CD8-positive, alpha-beta memory T cell (primary cell): ENCODE measurements at regions of chr22 and their contacts with region 1.

Region 1: GRCh38 chr22:30423982-30424963 is 1.3 kb upstream of the MTFP1 start:
- DNase-seq: peak; percentile 96 to 100 (median 98)
- H3K4me3 ChIP-seq: peak overlapping the region; percentile 73
- H3K4me3 Mint-ChIP-seq: peak overlapping the region; percentile 91 to 98 (median 97)
- H3K27ac ChIP-seq: peak overlapping the region; percentile 84
- H3K27ac Mint-ChIP-seq: peak overlapping the region; percentile 93 to 99 (median 98)
- H3K4me1 ChIP-seq: peaks cover 44% of the 10 kb centered on the region
- H3K4me1 Mint-ChIP-seq: peaks cover 51 to 66% (median 62%) of the 10 kb centered on the region in 3 donors
- H3K27me3 ChIP-seq: no peaks in the 10 kb centered on the region
- H3K27me3 Mint-ChIP-seq: no peaks in the 10 kb centered on the region

Region 2: DNA sequence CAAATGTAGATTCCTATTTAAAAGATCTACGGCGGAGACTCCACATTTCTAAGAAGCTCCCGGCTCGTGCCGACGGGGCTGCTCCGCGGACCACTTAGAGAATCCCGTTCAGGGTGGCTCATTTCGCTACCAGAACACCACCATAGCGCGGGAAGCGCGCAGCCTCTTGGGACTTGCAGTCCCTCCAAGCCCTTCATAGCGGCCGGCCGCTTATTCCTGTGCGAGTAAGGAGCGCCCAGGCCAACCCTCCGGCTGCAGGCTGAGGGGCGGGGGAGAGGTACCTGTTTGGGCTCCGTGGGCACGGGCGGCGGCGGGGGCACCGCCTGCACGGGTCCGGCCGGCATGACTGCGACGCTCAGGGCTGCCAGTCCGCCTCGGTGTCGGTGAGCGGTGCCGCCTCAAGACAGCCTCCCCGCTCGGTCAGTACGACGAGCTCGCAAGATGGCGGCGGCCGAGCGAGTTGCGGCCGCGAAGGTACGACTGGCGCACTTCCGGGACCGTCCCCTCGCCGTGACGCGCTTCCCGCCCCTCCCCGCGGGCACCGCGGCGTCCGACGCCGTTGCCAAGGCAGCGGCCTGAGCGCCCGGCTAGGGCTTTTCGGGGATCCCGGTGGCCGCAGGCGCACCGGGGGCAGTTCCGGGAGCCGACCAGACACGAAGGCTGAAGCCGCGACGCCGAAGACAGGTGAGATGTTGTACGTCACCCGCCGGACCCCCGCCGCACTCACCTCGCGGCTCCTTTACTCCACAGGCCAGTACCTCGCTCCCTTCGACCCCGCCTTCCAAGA is 67.6 kb before region 1 on chr22 and contains the starts of genes CCDC157 and SF3A1:
- CTCF ChIA-PET with region 1: no interaction called
- POLR2A ChIA-PET with region 1: interaction called, 16 read pairs
- DNase-seq: peak; percentile 81 to 89 (median 88)
- H3K4me3 ChIP-seq: peak within 1 kb of the TSS; percentile 96
- H3K4me3 Mint-ChIP-seq: peak within 1 kb of the TSS; percentile 94 to 99 (median 98)
- H3K27ac ChIP-seq: peak within 1 kb of the TSS; percentile 98
- H3K27ac Mint-ChIP-seq: peak within 1 kb of the TSS; percentile 91 to 99 (median 96)
- H3K4me1 ChIP-seq: peaks cover 41% of the 10 kb centered on the region
- H3K4me1 Mint-ChIP-seq: peaks cover 46 to 57% (median 57%) of the 10 kb centered on the region in 3 donors
- H3K27me3 ChIP-seq: no peaks in the 10 kb centered on the region
- H3K27me3 Mint-ChIP-seq: peaks cover 0 to 3% of the 10 kb centered on the region in 2 donors
- total RNA-seq, gene CCDC157: 2.7 to 2.9 TPM
- total RNA-seq, gene SF3A1: 235 to 241 TPM

Region 3: GRCh38 chr22:30386960-30387827 is 37.1 kb before region 1 on chr22 and contains the start of gene RNF215:
- CTCF ChIA-PET with region 1: interaction called, 21 read pairs
- POLR2A ChIA-PET with region 1: interaction called, 3 read pairs
- DNase-seq: peak; percentile 74 to 82 (median 79)
- H3K4me3 ChIP-seq: peak within 1 kb of the TSS; percentile 22
- H3K4me3 Mint-ChIP-seq: peak within 1 kb of the TSS; percentile 64 to 93 (median 78)
- H3K27ac ChIP-seq: no peak within 1 kb of the TSS
- H3K27ac Mint-ChIP-seq: peak within 1 kb of the TSS; percentile 13 to 96 (median 71)
- H3K4me1 ChIP-seq: peaks cover 4% of the 10 kb centered on the region
- H3K4me1 Mint-ChIP-seq: peaks cover 10 to 20% (median 12%) of the 10 kb centered on the region in 3 donors
- H3K27me3 ChIP-seq: no peaks in the 10 kb centered on the region
- H3K27me3 Mint-ChIP-seq: peaks cover 4 to 14% of the 10 kb centered on the region in 2 donors
- total RNA-seq, gene RNF215: 6.3 to 7.9 TPM

Region 4: DNA sequence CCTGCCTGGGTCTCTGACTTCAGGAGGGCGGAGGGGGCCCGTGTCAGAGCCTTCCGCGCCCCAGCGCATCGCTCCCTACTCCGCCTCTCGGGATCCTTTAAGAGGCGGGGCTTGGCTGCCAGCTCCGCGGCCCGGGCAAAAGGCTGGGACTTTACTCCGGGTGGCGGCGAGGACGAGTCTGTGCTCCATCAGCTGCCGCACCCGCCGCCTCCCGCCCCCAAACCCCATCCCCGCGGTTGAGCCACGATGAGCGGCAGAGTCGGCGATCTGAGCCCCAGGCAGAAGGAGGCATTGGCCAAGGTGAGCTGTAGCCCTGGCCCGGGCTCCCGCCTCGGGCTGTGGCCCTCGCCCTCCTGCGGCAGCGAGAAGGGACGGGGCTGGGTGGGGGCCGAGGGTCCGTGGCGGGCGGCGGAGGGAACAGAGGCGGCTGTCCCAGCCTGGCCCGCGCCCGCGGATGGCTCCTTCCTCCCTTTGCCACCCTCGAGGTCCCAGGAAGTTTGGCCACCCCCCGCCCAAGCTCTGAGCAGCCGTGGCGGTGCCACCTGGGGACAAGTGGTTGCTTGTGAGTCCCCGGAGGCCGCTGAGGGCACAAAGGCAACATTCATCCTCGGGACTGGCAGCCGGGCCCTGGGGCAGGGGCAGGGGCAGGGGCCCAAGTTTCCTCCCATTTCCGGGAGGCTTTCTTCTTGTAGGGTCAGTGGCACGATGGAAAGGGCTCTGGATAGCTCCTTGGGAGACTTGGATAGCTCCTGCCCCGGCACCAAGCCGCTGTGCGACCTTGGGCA is 27.2 kb before region 1 on chr22 and contains the start of gene SEC14L2:
- CTCF ChIA-PET with region 1: interaction called, 21 read pairs
- POLR2A ChIA-PET with region 1: interaction called, 3 read pairs
- DNase-seq: peak; percentile 39 to 63 (median 42)
- H3K4me3 ChIP-seq: peak within 1 kb of the TSS; percentile 24
- H3K4me3 Mint-ChIP-seq: peak within 1 kb of the TSS; percentile 79 to 93 (median 81)
- H3K27ac ChIP-seq: no peak within 1 kb of the TSS
- H3K27ac Mint-ChIP-seq: peak within 1 kb of the TSS in 6 of 8 donors; percentile 40 to 91 (median 66)
- H3K4me1 ChIP-seq: peaks cover 41% of the 10 kb centered on the region
- H3K4me1 Mint-ChIP-seq: peaks cover 24 to 31% (median 25%) of the 10 kb centered on the region in 3 donors
- H3K27me3 ChIP-seq: peaks cover 12% of the 10 kb centered on the region
- H3K27me3 Mint-ChIP-seq: peaks cover 24 to 42% of the 10 kb centered on the region in 2 donors
- total RNA-seq, gene SEC14L2: 4.4 to 4.9 TPM

Region 5: DNA sequence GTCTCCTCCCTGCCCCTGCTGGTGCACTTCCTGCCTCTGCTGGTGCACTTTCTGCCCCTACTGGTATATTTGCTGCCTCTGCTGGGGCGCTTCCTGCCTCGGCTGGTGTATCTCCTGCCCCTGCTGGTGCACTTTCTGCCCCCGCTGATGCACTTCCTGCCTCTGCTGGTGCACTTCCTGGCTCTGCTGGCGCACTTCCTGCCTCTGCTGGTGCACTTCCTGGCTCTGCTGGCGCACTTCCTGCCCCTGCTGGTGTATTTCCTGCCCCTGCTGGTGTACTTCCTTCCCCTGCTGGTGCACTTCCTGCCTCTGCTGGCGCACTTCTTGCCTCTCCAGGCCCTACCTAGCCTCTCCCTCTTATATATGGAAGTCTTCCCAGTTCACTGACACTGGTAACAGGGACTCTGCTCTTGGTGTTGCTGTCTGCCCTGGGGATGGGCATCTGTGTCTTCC is 11.4 kb after region 1 on chr22:
- CTCF ChIA-PET with region 1: interaction called, 37 read pairs
- POLR2A ChIA-PET with region 1: interaction called, 13 read pairs
- DNase-seq: peak; percentile 77 to 95 (median 94)
- H3K4me3 ChIP-seq: peak overlapping the region; percentile 58
- H3K4me3 Mint-ChIP-seq: peak overlapping the region; percentile 50 to 93 (median 72)
- H3K27ac ChIP-seq: peak overlapping the region; percentile 62
- H3K27ac Mint-ChIP-seq: peak overlapping the region; percentile 89 to 100 (median 98)
- H3K4me1 ChIP-seq: peaks cover 22% of the 10 kb centered on the region
- H3K4me1 Mint-ChIP-seq: peaks cover 18 to 27% (median 25%) of the 10 kb centered on the region in 3 donors
- H3K27me3 ChIP-seq: peaks cover 9% of the 10 kb centered on the region
- H3K27me3 Mint-ChIP-seq: peaks cover 33% of the 10 kb centered on the region in 2 donors

Region 6: DNA sequence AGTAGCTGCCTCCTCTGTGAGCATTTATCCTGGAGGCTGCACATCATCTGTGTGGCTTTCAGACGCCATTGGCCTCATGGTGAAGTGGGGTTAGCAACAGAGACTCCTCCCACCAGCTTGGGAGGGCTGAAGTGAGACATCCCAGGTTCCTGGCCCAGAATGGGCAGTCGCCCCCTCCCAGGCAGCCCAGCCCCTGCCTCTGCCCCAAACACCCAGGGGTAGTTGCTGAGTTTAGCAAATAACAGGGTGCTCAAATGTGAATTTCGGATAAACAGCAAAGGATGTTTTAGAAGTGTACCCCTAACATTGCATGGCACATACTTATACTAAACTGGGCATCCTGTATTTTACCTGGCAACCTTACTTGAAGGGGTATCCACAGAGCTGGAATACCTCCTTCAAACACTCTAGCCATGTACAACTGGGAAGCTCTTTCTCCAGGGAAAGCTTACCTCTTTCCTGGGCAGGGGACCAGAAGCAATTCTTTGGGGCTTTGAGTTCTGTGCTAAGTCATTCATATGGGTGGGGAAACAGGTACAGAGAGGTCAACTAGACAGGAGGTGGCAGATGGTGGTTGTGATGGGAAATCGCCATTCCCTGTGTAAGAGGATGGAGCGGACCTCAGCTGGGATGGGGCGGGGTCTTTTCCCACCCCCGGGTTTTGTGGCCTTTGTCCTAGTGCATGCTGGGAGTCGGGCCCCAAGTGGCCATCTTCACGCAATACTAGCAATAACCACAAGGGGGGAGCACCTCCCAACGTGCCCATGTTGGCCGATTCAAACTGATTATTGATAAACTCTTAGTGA is 20.6 kb after region 1 on chr22:
- CTCF ChIA-PET with region 1: interaction called, 11 read pairs
- POLR2A ChIA-PET with region 1: interaction called, 5 read pairs
- DNase-seq: peak in 3 of 5 donors; percentile 24 to 59 (median 39)
- H3K4me3 ChIP-seq: no peak overlapping the region
- H3K4me3 Mint-ChIP-seq: peak overlapping the region in 1 of 7 donors; percentile 39
- H3K27ac ChIP-seq: no peak overlapping the region
- H3K27ac Mint-ChIP-seq: peak overlapping the region in 4 of 8 donors; percentile 26 to 55 (median 42)
- H3K4me1 ChIP-seq: peaks cover 11% of the 10 kb centered on the region
- H3K4me1 Mint-ChIP-seq: peaks cover 14 to 30% (median 20%) of the 10 kb centered on the region in 3 donors
- H3K27me3 ChIP-seq: no peaks in the 10 kb centered on the region
- H3K27me3 Mint-ChIP-seq: peaks cover 49 to 83% of the 10 kb centered on the region in 2 donors

Region 7: GRCh38 chr22:31509061-31509762 is 1084.9 kb after region 1 on chr22:
- CTCF ChIA-PET with region 1: no interaction called
- POLR2A ChIA-PET with region 1: no interaction called
- DNase-seq: no peak
- H3K4me3 ChIP-seq: no peak overlapping the region
- H3K4me3 Mint-ChIP-seq: no peak overlapping the region
- H3K27ac ChIP-seq: no peak overlapping the region
- H3K27ac Mint-ChIP-seq: peak overlapping the region in 4 of 8 donors; percentile 13 to 64 (median 28)
- H3K4me1 ChIP-seq: peaks cover 5% of the 10 kb centered on the region
- H3K4me1 Mint-ChIP-seq: peaks cover 34 to 61% (median 49%) of the 10 kb centered on the region in 3 donors
- H3K27me3 ChIP-seq: no peaks in the 10 kb centered on the region
- H3K27me3 Mint-ChIP-seq: no peaks in the 10 kb centered on the region